Colonic mucosa (tissue), 4 donors: ENCODE measurements at regions of chr9 and their contacts with region 1.

Region 1: GRCh38 chr9:136283291-136284235 is 20.3 kb downstream of the CCDC187 start:
- DNase-seq: peak; percentile 73
- H3K4me3 ChIP-seq: no peak overlapping the region
- H3K27ac ChIP-seq: no peak overlapping the region
- H3K4me1 ChIP-seq: peaks cover 5% of the 10 kb centered on the region
- H3K27me3 ChIP-seq: no peaks in the 10 kb centered on the region
- CTCF ChIP-seq: peak; percentile 74

Region 2: GRCh38 chr9:136170006-136170901 is 113.3 kb before region 1 on chr9:
- intact Hi-C with region 1: loop called (anchors 10 kb)
- DNase-seq: peak; percentile 33
- H3K4me3 ChIP-seq: no peak overlapping the region
- H3K27ac ChIP-seq: no peak overlapping the region
- H3K4me1 ChIP-seq: no peaks in the 10 kb centered on the region
- H3K27me3 ChIP-seq: no peaks in the 10 kb centered on the region
- CTCF ChIP-seq: peak; percentile 66